BJ (cell line): ENCODE measurements at regions of chrX and their contacts with region 1.

Region 1: GRCh38 chrX:17848545-17849265 is 12.4 kb downstream of the RAI2 start:
- DNase-seq: no peak
- H3K4me3 ChIP-seq: no peak overlapping the region
- H3K27me3 ChIP-seq: no peaks in the 10 kb centered on the region
- CTCF ChIP-seq: no peak

Region 2: GRCh38 chrX:17456526-17456925 is 392.2 kb before region 1 on chrX:
- CTCF ChIA-PET with region 1: no interaction called
- POLR2A ChIA-PET with region 1: no interaction called
- DNase-seq: no peak
- H3K4me3 ChIP-seq: no peak overlapping the region
- H3K27me3 ChIP-seq: no peaks in the 10 kb centered on the region
- CTCF ChIP-seq: no peak

Region 3: DNA sequence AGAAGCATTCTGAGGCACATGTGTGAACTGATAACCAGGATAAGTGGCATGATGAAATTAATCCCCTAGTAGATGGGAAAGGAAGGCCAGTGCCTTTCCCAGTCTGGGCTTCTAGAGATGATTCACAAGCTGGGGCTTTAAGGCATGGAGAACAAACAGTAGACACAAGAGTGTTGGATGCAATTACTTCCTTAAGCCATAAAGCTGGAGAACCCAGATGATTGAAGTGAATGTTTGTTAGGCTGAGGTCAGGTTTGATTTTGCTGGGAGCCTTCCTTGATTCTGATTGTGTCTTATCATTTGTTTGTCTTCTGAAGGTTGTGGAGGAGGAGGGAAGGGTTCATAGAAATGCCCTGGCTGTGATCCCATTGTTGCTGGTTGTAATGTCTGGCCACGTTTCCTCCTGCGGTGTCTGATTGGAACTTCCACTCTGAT is 348.5 kb before region 1 on chrX:
- CTCF ChIA-PET with region 1: no interaction called
- POLR2A ChIA-PET with region 1: no interaction called
- DNase-seq: no peak
- H3K4me3 ChIP-seq: no peak overlapping the region
- H3K27me3 ChIP-seq: no peaks in the 10 kb centered on the region
- CTCF ChIP-seq: no peak

Region 4: DNA sequence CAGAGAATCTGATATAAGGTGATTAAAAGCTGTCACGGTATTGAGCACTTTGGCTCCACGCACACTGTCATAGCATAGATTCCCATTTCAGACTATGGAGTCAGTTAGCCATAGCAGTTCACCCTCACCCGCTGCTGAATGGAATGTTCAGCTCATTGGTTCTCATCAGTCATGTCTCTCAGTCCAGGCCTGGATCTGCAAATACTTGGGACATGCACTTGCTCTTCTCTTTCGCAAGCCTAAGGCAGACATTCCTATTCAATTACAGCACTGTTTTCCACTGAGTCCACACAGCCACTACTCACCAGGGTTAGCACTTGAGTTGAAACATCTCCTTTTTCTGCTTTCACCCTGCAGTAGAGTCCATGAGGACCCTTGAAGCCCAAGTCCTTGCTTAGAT is 142.0 kb before region 1 on chrX:
- CTCF ChIA-PET with region 1: no interaction called
- POLR2A ChIA-PET with region 1: interaction called, 12 read pairs
- DNase-seq: peak; percentile 58
- H3K4me3 ChIP-seq: no peak overlapping the region
- H3K27me3 ChIP-seq: no peaks in the 10 kb centered on the region
- CTCF ChIP-seq: no peak